ENCODE measurements at regions of chr10 and their contacts with region 1.

Region 1: DNA sequence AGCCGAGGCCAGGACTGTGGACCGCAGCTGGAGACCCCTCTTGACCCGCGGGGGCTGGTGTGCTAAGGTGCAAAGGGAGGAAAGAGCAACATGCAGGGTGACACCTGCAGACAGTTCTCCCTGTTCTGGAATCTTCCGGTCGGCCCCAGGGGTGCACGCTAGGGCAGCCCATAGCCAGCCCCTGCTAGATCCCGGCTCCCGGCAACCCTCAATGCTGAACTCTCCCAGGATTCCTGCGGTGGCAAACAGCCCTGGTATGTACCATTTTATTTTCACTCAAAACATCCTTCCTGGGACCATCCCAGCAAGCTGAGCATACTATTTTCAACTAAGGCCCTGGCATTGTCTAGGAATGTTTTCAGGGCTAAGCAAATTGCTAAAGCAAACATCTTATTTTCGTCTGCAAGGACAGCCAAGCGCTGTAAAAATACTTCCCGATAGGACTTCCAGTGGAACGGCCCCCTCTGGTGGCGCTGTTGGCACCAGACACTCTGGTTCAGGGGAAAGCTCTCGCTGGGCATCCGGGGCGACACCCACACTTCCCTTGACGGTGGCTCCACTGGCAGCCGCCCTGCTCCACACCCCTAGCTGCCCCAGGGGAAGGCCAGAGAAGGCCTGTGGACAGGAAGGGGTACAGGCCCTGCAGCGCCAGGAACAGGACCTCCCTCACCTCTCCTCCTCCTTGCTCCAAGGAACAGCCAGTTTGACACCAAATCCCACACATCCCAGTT is 99.4 kb downstream of the CTBP2 start:
- DNase-seq: peak; percentile 69 to 98 (median 90)

Region 2: GRCh38 chr10:125000366-125001312 is 60.4 kb before region 1 on chr10:
- intact Hi-C with region 1: loop called (anchors 5 kb)
- DNase-seq: peak in 8 of 10 donors; percentile 36 to 93 (median 64)

Region 3: GRCh38 chr10:125144693-125145623 is 84.0 kb after region 1 on chr10:
- intact Hi-C with region 1: loop called (anchors 5 kb)
- DNase-seq: peak in 2 of 10 donors; percentile 48 to 89

Region 4: GRCh38 chr10:125160856-125161706 is 100.1 kb after region 1 on chr10:
- intact Hi-C with region 1: loop called (anchors 2 kb)
- DNase-seq: peak in 9 of 10 donors; percentile 53 to 95 (median 65)

Region 5: GRCh38 chr10:125419831-125420230 is 358.8 kb after region 1 on chr10:
- intact Hi-C with region 1: no loop called
- DNase-seq: no peak